ENCODE measurements at regions of chr4 and their contacts with region 1.

Region 1: GRCh38 chr4:24778464-24779225 is 16.7 kb upstream of the SOD3 start:
- DNase-seq: peak; percentile 96
- H3K4me3 Mint-ChIP-seq: no peak overlapping the region
- H3K27ac Mint-ChIP-seq: no peak overlapping the region
- H3K4me1 Mint-ChIP-seq: peaks cover 45% of the 10 kb centered on the region
- H3K27me3 Mint-ChIP-seq: no peaks in the 10 kb centered on the region
- CTCF ChIP-seq: no peak

Region 2: GRCh38 chr4:24753500-24753899 is 25.1 kb before region 1 on chr4:
- CTCF ChIA-PET with region 1: interaction called, 3 read pairs
- POLR2A ChIA-PET with region 1: interaction called, 5 read pairs
- intact Hi-C with region 1: loop called (anchors 2 kb)
- DNase-seq: peak; percentile 88
- H3K4me3 Mint-ChIP-seq: no peak overlapping the region
- H3K27ac Mint-ChIP-seq: peak overlapping the region; percentile 57
- H3K4me1 Mint-ChIP-seq: peaks cover 7% of the 10 kb centered on the region
- H3K27me3 Mint-ChIP-seq: no peaks in the 10 kb centered on the region
- CTCF ChIP-seq: no peak

Region 3: DNA sequence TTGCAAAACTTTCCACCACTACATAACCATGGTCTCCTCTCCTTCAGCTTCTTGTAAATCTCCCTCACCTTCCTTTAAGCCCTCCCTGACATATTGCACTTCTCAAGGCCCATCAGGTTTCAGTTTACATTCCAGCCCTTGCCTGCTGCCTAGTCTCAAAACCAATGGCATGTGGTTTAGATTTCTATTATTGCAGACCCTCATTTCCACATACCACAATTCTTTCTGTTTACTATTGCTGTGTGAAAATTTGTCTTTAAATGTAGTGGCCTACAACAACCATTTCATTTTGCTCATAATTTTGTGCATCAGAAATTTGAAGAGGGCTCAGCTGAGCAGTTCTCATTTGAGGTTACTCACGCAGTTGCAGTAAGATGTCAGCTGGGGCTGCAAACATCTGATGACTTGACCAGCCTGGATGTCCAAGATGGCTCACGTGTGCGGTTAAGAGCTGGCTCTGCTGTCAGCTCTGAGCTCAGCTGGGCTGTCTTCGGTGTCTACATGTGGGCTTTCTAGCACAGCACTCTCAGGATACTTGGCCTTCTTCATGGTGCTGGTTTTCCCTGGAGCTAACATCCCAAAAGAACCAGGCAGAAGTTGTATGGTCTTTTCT is 13.2 kb before region 1 on chr4:
- CTCF ChIA-PET with region 1: no interaction called
- POLR2A ChIA-PET with region 1: interaction called, 15 read pairs
- intact Hi-C with region 1: no loop called
- DNase-seq: no peak
- H3K4me3 Mint-ChIP-seq: no peak overlapping the region
- H3K27ac Mint-ChIP-seq: peak overlapping the region; percentile 47
- H3K4me1 Mint-ChIP-seq: peaks cover 20% of the 10 kb centered on the region
- H3K27me3 Mint-ChIP-seq: no peaks in the 10 kb centered on the region
- CTCF ChIP-seq: no peak

Measured in MCF 10A (cell line).